GM10248 (cell line): ENCODE measurements at regions of chr21 and their contacts with region 1.

Region 1: DNA sequence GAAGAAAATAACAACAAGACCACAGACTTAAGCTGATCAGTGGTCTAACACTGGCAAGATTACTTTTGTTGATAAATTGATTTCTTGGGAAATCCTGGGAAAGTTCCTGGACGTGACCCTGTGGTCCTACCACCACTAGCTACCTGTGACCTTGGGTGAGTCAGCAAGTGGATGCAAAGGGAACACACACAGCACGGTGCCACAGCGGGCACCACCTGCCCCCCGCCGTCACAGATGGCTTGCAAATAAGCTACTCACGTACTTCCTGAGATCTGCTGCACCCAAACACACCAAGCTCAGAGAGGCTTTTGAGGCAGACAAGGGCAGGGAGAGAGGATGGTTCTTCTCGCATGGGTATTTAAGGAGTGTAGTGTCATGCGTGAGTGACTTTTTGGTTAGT is 12.7 kb downstream of the CFAP298 start:
- DNase-seq: no peak
- CTCF ChIP-seq: no peak

Region 2: GRCh38 chr21:32403201-32403777 is 196.2 kb before region 1 on chr21:
- CTCF ChIA-PET with region 1: interaction called, 75 read pairs
- POLR2A ChIA-PET with region 1: interaction called, 5 read pairs
- DNase-seq: peak; percentile 51
- CTCF ChIP-seq: peak; percentile 41

Region 3: DNA sequence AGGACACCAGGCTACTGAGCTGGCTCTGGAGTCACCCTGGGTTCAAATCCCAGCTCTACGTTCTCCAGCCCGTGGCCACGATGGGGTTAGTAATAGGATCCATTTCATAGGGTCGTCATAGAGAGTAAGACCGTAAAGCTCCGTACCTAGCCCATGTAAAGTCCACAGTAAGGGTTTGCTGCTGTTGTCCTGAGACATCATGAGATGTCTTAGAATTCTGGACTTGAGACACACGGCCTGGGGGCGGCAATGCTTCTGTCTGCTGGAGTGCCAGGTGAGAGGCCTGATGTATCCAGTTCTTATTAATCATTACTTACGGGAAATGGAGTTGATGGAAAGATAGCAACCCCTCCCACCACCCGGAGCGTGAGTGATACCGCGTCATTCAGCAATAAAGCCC is 17.8 kb before region 1 on chr21:
- CTCF ChIA-PET with region 1: interaction called, 11 read pairs
- POLR2A ChIA-PET with region 1: no interaction called
- DNase-seq: no peak
- CTCF ChIP-seq: no peak

Region 4: GRCh38 chr21:32612075-32612998 is 12.8 kb after region 1 on chr21 and contains the start of gene CFAP298:
- CTCF ChIA-PET with region 1: interaction called, 76 read pairs
- POLR2A ChIA-PET with region 1: no interaction called
- DNase-seq: peak; percentile 91
- CTCF ChIP-seq: no peak

Region 5: GRCh38 chr21:32658524-32658923 is 59.0 kb after region 1 on chr21:
- CTCF ChIA-PET with region 1: no interaction called
- POLR2A ChIA-PET with region 1: no interaction called
- DNase-seq: no peak
- CTCF ChIP-seq: no peak